ENCODE measurements at regions of chr14 and their contacts with region 1.

Region 1: GRCh38 chr14:68816262-68816942 is 23.5 kb upstream of the ZFP36L1 start:
- DNase-seq: peak; percentile 71 to 90 (median 85)
- H3K4me3 ChIP-seq: peak overlapping the region; percentile 40 to 79 (median 64)
- H3K27ac ChIP-seq: peak overlapping the region; percentile 74 to 100 (median 99)
- H3K27me3 ChIP-seq: no peaks in the 10 kb centered on the region
- CTCF ChIP-seq: peak; percentile 87 to 100 (median 98)

Region 2: DNA sequence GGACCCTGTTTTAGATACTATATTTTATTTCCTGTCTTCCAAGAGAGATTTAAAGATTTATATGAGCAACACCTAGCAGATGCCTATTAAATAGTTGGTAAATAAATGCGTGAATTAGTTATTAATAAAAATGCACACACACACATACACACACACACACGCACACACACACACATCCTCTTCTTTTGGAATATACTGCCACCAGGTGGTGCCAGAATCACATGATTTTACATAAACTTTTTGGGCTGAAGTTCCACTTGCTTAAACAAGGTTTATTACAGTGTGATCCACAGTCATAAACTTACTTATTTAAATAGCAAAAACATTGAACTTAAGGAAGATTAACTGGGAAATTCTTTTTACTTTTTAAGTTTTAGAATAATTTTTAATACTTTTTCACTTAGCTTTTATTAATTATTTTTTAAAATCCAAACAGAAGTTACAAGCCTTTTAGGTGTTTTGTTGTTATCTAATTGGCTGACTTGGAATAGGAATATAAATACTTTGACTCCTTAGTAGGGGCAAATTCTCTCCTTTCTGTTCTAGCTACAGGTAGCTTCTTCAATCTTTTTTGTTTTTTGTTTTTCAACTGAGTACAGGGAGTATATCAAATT is 979.3 kb before region 1 on chr14:
- intact Hi-C with region 1: loop called in 1 of 2 experiments (anchors 5 kb)
- DNase-seq: no peak
- H3K4me3 ChIP-seq: no peak overlapping the region
- H3K27ac ChIP-seq: no peak overlapping the region
- H3K27me3 ChIP-seq: no peaks in the 10 kb centered on the region
- CTCF ChIP-seq: peak in 55 of 56 donors; percentile 26 to 69 (median 46)

Region 3: GRCh38 chr14:67943947-67944346 is 872.5 kb before region 1 on chr14:
- intact Hi-C with region 1: loop called (anchors 1 to 2 kb)
- DNase-seq: peak in 6 of 10 donors; percentile 7 to 70 (median 32)
- H3K4me3 ChIP-seq: peak overlapping the region in 1 of 59 donors; percentile 16
- H3K27ac ChIP-seq: no peak overlapping the region
- H3K27me3 ChIP-seq: no peaks in the 10 kb centered on the region
- CTCF ChIP-seq: peak; percentile 64 to 90 (median 80)

Region 4: DNA sequence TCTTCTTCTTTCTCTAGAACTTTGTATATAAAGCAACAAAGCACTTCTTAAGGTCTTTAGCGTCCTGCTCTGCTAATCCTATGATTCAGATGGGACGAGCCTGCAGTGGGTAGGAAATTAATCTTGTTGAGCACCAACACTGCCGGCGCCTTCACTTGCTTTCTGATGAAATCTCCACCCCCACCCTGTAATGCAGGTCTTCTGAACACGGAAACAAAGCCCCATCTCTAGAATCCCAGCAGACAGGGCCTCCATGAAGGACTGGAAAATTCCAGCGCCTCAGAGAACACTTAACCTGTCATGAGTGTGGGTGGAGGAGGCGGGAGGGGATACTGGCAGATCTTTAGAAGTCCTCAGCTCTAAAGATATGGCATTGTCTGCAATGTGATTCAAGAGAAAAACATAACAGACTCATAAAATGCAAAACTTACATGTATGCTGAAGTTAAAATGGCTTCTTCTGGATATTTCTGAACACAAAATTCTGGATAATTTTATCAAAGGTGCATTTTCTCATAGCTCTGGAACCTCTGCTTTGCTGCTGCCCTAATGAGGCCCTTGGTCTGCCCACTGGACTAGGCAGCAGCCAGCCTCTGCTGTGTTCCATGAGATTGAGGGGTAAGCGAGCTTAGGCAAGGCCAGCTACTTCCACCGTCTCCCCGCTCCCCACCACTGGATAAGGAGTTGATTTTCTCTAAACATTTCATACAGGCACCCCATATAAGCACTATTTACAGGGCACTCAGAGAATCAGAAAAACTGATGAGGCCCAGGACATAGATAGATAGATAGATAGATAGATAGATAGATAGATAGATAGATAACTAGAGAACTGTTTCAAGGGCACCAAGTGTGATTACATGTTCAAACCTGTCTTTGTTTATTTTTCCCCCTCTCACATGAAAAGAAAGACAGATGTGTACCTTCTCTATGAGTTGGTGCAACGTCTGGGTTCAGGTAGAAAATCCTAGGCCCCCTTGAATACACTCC is 66.6 kb before region 1 on chr14:
- intact Hi-C with region 1: no loop called
- DNase-seq: no peak
- H3K4me3 ChIP-seq: no peak overlapping the region
- H3K27ac ChIP-seq: no peak overlapping the region
- H3K27me3 ChIP-seq: no peaks in the 10 kb centered on the region
- CTCF ChIP-seq: no peak

Region 5: GRCh38 chr14:68795597-68796417 is 20.6 kb before region 1 on chr14:
- intact Hi-C with region 1: loop called in 1 of 2 experiments (anchors 2 kb)
- DNase-seq: peak in 5 of 10 donors; percentile 50 to 70 (median 65)
- H3K4me3 ChIP-seq: peak overlapping the region; percentile 46 to 83 (median 66)
- H3K27ac ChIP-seq: peak overlapping the region; percentile 9 to 99 (median 94)
- H3K27me3 ChIP-seq: peaks cover 0 to 56% (median 24%) of the 10 kb centered on the region in 45 donors
- CTCF ChIP-seq: peak in 53 of 56 donors; percentile 11 to 65 (median 45)

Measured in dorsolateral prefrontal cortex (tissue), 120 donors.